HepG2 (cell line): ENCODE measurements at regions of chr6 and their contacts with region 1.

Region 1: DNA sequence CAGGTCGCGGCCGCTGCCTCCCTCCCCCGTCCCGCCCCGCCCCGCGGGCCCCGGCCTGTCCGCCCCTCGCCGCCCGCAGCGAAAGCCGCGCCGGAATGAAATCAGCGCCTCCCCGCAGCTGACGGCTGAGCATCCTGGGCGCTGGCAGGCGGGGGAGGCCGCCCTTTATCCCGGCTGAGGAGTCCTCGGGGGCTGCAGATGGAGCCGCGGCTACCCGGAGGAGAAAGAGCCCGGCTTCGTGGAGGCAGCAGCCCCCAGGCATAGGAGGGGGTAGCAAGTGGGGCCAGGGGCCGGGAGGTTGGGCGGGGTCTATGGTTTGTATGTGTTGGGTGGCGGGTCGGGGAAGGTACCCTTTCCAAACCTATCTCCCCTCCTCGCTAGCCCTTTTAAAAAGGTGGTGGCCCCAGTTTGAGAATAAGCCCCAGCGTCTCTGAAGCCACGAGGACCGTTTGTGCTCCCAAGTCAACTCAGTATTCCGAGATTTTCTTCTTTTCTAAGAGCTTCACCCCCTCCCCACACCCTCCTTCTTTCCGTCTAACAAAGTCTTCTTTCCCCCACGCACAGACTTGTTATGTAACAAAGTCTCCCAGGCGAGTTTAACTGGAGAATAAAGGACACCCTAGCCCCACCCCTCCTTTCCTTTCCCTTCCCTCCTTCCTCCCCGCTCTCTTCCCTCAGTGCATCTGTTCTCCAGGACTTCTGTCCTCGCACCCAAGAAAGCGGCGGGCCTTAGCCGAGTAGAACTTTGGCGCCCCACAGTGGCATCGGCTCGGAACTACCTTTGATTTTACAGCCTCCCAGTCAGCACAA is 11.0 kb downstream of the POU3F2 start:
- DNase-seq: peak; percentile 40
- ATAC-seq: peak; percentile 85
- H3K4me3 ChIP-seq: peak overlapping the region in 1 of 3 experiments; percentile 16; a peak in 1 of 6 replicates
- H3K27ac ChIP-seq: no peak overlapping the region
- H3K4me1 ChIP-seq: no peaks in the 10 kb centered on the region
- H3K27me3 ChIP-seq: peaks cover 3 to 47% of the 10 kb centered on the region in 2 experiments
- CTCF ChIP-seq: peak; percentile 92
- EP300 ChIP-seq: no peak
- POLR2A ChIP-seq: no peak
- RAD21 ChIP-seq: peak; percentile 75

Region 2: DNA sequence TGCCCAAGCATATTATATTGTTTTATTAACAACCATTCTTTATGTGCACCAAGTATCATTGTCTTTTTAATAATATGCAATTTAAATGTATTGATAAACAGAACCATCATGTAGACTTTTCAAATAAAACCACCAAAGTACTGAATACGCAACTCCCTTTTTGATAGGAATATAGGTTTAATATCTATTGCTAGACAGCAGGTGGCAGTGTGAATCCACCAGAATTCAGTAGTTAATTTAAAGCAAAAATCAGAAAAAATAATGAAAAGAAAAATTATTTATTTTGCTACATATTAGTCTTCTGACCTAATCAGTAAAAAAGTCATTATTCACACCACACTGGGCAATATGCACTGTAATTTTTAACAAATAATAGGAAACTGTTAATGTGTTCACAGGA is 1777.2 kb before region 1 on chr6:
- CTCF ChIA-PET with region 1: no interaction called
- POLR2A ChIA-PET with region 1: no interaction called
- in situ Hi-C with region 1: loop called (anchors 25 kb)
- intact Hi-C with region 1: loop called (anchors 5 kb)
- DNase-seq: peak; percentile 3
- ATAC-seq: no peak
- H3K4me3 ChIP-seq: no peak overlapping the region
- H3K27ac ChIP-seq: no peak overlapping the region
- H3K4me1 ChIP-seq: no peaks in the 10 kb centered on the region
- H3K27me3 ChIP-seq: no peaks in the 10 kb centered on the region
- CTCF ChIP-seq: peak; percentile 39
- EP300 ChIP-seq: no peak
- POLR2A ChIP-seq: no peak
- RAD21 ChIP-seq: no peak

Region 3: GRCh38 chr6:97497713-97498331 is 1347.6 kb before region 1 on chr6:
- CTCF ChIA-PET with region 1: interaction called, 4 read pairs
- POLR2A ChIA-PET with region 1: no interaction called
- in situ Hi-C with region 1: loop called (anchors 25 kb)
- intact Hi-C with region 1: loop called (anchors 1 kb)
- DNase-seq: peak; percentile 59
- ATAC-seq: peak; percentile 99
- H3K4me3 ChIP-seq: no peak overlapping the region
- H3K27ac ChIP-seq: no peak overlapping the region
- H3K4me1 ChIP-seq: no peaks in the 10 kb centered on the region
- H3K27me3 ChIP-seq: no peaks in the 10 kb centered on the region
- CTCF ChIP-seq: peak; percentile 81
- EP300 ChIP-seq: no peak
- POLR2A ChIP-seq: no peak
- RAD21 ChIP-seq: peak; percentile 43; the same call in 1 of the 2 replicates

Region 4: GRCh38 chr6:98039869-98040607 is 805.4 kb before region 1 on chr6:
- CTCF ChIA-PET with region 1: no interaction called
- POLR2A ChIA-PET with region 1: no interaction called
- in situ Hi-C with region 1: loop called (anchors 25 kb)
- intact Hi-C with region 1: no loop called
- DNase-seq: no peak
- ATAC-seq: no peak
- H3K4me3 ChIP-seq: no peak overlapping the region
- H3K27ac ChIP-seq: no peak overlapping the region
- H3K4me1 ChIP-seq: no peaks in the 10 kb centered on the region
- H3K27me3 ChIP-seq: no peaks in the 10 kb centered on the region
- CTCF ChIP-seq: no peak
- EP300 ChIP-seq: no peak
- POLR2A ChIP-seq: no peak
- RAD21 ChIP-seq: no peak

Region 5: GRCh38 chr6:98947351-98948292 is 102.2 kb after region 1 on chr6 and contains the start of gene FBXL4:
- CTCF ChIA-PET with region 1: no interaction called
- POLR2A ChIA-PET with region 1: no interaction called
- in situ Hi-C with region 1: no loop called
- intact Hi-C with region 1: loop called (anchors 5 kb)
- DNase-seq: peak; percentile 87
- ATAC-seq: peak; percentile 94
- H3K4me3 ChIP-seq: peak within 1 kb of the TSS; percentile 87 to 90 (median 87)
- H3K27ac ChIP-seq: peak within 1 kb of the TSS; percentile 89
- H3K4me1 ChIP-seq: peaks cover 32% of the 10 kb centered on the region
- H3K27me3 ChIP-seq: no peaks in the 10 kb centered on the region; a peak in 2 of 5 replicates
- CTCF ChIP-seq: no peak
- EP300 ChIP-seq: no peak
- POLR2A ChIP-seq: peak; percentile 62 to 64
- RAD21 ChIP-seq: peak; percentile 10; the same call in 1 of the 2 replicates
- total RNA-seq, gene FBXL4: 13.2 and 16.2 TPM in 2 replicates